Sigmoid colon (tissue), 7 donors: ENCODE measurements at regions of chr16 and their contacts with region 1.

Region 1: GRCh38 chr16:72832621-72833248 is 215.2 kb downstream of the ZFHX3 start:
- DNase-seq: peak; percentile 94
- H3K4me3 ChIP-seq: no peak overlapping the region
- H3K27ac ChIP-seq: peak overlapping the region; percentile 15 to 62 (median 46)
- H3K4me1 ChIP-seq: peaks cover 0 to 50% (median 38%) of the 10 kb centered on the region in 4 donors
- H3K27me3 ChIP-seq: no peaks in the 10 kb centered on the region
- CTCF ChIP-seq: peak; percentile 86 to 99 (median 88)
- EP300 ChIP-seq: no peak
- POLR2A ChIP-seq: no peak

Region 2: GRCh38 chr16:72932050-72932449 is 99.3 kb after region 1 on chr16:
- intact Hi-C with region 1: loop called (anchors 5 kb)
- DNase-seq: peak; percentile 26
- H3K4me3 ChIP-seq: no peak overlapping the region
- H3K27ac ChIP-seq: peak overlapping the region; percentile 19 to 66 (median 54)
- H3K4me1 ChIP-seq: peaks cover 0 to 68% (median 45%) of the 10 kb centered on the region in 4 donors
- H3K27me3 ChIP-seq: no peaks in the 10 kb centered on the region
- CTCF ChIP-seq: no peak
- EP300 ChIP-seq: no peak
- POLR2A ChIP-seq: no peak

Region 3: DNA sequence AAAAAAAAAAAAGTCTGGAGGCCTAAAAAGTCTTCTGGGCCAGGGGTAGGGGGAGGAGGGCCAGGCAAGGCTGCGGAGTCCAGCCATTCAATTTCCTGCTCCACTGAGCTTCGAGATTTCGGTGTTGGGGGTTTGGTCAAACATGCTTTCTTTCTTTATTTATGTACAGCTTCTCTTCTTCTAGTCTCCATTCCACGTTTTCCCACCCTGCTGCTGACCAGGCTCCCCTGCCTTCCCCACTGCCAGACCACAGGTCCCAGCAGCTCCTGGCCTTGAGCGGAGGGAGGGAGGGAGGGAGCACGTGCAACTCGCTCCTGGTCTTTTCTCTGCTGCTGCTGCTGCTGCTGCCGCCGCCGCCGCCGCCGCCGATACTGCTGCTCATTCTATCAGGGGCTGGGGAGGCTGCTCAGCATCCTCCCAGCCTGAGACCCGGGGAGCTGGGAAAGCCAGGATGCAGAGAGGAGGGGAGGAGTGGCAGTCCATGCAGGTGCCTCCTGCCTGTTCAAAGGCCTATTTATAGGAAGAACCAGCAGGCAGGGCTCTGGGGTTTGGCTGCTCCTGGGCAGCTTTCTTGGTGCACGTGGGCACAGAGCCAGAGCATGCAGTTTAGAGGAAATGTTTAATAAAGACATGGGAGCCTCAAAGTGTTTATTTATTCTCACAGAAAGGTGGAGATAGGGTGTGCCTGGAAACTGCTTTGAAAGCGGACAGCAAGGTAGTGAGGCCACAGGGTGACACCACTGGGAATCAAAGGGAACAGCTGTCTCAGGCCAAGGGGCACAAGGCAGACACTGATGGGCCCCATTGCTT is 238.6 kb after region 1 on chr16:
- intact Hi-C with region 1: loop called (anchors 5 kb)
- DNase-seq: peak; percentile 87
- H3K4me3 ChIP-seq: peak overlapping the region in 3 of 4 donors; percentile 29 to 37 (median 30)
- H3K27ac ChIP-seq: peak overlapping the region; percentile 78 to 98 (median 89)
- H3K4me1 ChIP-seq: peaks cover 0 to 53% (median 46%) of the 10 kb centered on the region in 4 donors
- H3K27me3 ChIP-seq: peaks cover 0 to 8% (median 0%) of the 10 kb centered on the region in 3 donors
- CTCF ChIP-seq: no peak
- EP300 ChIP-seq: no peak
- POLR2A ChIP-seq: no peak

Region 4: DNA sequence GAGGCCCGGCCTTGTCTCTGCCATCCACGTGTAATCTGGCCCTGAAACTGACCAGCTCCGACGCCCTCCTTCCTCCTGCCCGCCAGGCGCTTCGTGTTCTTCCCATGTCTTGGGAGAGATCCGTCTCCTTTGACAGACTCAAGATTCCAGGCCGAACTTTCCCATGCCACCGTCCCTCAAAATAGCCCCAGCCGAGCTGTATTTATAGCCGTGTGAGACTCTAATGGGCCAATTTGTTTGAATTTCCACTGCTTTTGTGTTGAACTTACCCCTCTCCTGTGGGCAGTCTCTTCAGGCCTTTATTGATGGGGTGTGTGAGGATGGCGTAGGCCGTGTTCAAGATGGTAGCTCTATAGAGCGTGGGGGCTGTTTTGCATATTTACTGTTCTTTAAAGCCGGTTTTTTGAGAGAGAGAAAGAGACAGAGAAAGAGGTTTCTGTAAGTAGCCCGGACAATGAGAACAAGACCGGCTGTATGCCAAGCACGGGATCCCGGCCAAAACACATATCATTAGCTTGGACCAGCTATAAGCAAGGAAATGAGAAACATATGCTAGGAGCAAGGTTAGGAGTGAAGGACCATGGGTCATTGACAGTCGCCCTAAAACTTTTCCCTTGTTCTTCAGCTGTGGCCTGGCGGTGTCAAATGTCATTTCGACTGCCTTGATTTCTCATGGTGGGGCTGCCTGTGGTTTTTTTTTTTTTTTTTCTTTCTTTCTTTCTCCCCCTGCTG is 339.7 kb after region 1 on chr16:
- intact Hi-C with region 1: loop called (anchors 1 kb)
- DNase-seq: peak; percentile 89
- H3K4me3 ChIP-seq: no peak overlapping the region
- H3K27ac ChIP-seq: peak overlapping the region; percentile 53 to 70 (median 66)
- H3K4me1 ChIP-seq: peaks cover 0 to 22% (median 15%) of the 10 kb centered on the region in 4 donors
- H3K27me3 ChIP-seq: no peaks in the 10 kb centered on the region
- CTCF ChIP-seq: peak in 1 of 4 experiments; percentile 17
- EP300 ChIP-seq: no peak
- POLR2A ChIP-seq: no peak